ENCODE measurements at regions of chr16 and their contacts with region 1.

Region 1: DNA sequence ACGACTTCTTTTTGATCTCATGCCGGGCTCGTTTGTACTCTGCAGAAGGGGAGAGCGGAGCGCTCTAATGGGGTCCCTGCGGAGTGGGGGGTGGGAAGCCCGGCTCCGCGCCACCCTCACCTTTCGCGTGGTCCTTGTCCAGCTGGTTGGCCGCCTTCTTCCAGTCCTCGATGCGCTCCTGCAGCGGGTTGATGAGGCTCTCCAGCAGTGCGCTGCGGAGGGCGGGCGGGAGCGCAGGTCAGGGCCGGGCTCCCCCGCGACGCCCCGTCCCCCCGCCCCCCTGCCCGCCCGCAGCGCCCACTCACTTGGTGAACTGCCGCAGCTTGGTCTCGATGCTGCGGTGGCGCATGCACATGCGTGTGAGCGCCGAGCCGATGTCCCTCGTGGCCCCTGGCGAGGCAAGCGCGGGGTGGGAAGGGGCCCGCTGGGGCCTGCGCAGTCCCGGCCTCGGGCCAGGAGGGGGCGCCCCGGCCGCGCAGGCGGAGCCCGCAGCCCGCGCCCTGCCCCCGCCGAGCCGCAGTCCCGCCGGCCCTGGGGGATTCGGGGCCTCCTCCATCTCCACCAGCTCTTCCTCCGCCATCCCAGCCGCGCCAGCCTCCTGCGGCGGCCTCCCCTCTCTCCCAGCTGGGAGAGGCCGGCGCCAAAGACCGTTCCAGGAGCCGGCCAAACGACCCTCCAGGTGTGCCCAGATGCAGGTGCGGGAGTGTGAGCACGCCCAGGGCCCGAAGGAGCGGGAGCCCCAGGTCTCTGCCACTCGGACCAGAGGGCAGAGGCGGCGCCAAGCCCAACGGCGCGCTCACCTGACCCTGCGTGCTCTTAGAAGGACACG is 6.0 kb downstream of the MTSS2 start:
- DNase-seq: no peak
- H3K4me3 ChIP-seq: no peak overlapping the region
- H3K27ac ChIP-seq: no peak overlapping the region
- H3K4me1 ChIP-seq: peaks cover 5% of the 10 kb centered on the region
- H3K27me3 ChIP-seq: no peaks in the 10 kb centered on the region
- CTCF ChIP-seq: peak; percentile 49 to 56
- POLR2A ChIP-seq: no peak

Region 2: DNA sequence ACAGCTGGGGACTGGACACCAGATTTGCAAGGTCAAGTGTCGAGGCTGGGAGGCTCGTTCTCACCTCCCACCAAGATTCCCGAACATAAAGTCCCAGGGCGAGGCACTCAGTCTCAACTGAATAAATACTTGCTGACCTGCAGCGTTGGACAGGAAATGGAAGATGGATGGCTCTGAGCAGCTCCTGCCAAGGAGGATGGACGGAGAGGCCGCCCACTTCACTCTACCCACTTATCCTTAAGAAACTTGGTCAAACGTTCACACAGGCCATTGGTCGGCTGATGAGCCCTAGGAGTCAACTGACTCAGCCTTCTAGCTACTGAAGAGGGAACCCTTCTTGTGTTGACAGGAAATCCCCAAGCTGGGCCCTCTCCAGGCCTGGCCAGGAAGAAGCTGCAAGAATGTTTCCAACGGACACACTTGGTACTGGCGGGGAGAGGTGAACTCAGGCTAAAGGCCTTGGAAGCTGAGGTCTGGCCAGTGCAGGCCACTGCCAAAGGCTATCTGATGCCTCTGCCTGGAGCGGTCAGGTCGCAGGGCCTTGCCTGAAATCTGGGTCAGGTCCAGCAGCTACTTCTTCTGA is 71.1 kb after region 1 on chr16:
- CTCF ChIA-PET with region 1: interaction called, 14 read pairs
- POLR2A ChIA-PET with region 1: no interaction called
- dilution Hi-C with region 1: no loop called
- intact Hi-C with region 1: no loop called
- DNase-seq: peak; percentile 90
- H3K4me3 ChIP-seq: no peak overlapping the region
- H3K27ac ChIP-seq: peak overlapping the region; percentile 19
- H3K4me1 ChIP-seq: peaks cover 28% of the 10 kb centered on the region
- H3K27me3 ChIP-seq: no peaks in the 10 kb centered on the region
- CTCF ChIP-seq: no peak
- POLR2A ChIP-seq: peak; percentile 36